ENCODE measurements at regions of chr15 and their contacts with region 1.

Region 1: GRCh38 chr15:90691982-90692773 is 25.0 kb upstream of the BLM start:
- DNase-seq: no peak
- H3K4me3 Mint-ChIP-seq: no peak overlapping the region
- H3K27ac Mint-ChIP-seq: no peak overlapping the region
- H3K4me1 Mint-ChIP-seq: peaks cover 49% of the 10 kb centered on the region
- H3K27me3 Mint-ChIP-seq: no peaks in the 10 kb centered on the region

Region 2: DNA sequence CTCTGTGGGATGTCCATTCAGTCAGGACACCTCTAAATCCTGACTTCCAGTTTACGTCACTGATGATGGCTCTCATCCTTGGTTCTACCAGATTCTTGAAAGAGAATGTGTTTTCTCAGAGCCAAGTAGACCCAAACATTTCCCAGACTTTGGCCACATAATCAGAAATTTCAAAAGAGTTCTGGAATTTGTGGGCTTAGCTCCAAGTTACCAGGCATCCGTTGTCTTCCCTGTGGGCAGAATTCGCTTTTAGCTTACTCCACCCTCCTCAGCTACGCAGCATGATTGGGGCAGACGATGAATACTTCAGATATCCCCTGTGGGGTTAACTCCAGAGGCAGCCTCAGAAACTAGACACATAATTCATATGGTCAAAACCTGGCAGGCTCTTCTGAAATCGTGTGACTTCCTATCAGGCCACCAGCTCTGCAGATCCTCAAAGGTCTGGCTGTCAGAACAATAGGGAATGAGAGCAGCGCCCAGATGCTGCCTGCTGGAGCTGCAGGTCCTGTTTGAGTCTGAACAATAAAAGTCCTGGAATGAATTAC is 131.9 kb before region 1 on chr15:
- intact Hi-C with region 1: loop called (anchors 10 kb)
- DNase-seq: no peak
- H3K4me3 Mint-ChIP-seq: no peak overlapping the region
- H3K27ac Mint-ChIP-seq: no peak overlapping the region
- H3K4me1 Mint-ChIP-seq: peaks cover 79% of the 10 kb centered on the region
- H3K27me3 Mint-ChIP-seq: no peaks in the 10 kb centered on the region

Region 3: GRCh38 chr15:90680371-90680935 is 11.7 kb before region 1 on chr15:
- intact Hi-C with region 1: loop called (anchors 1 kb)
- DNase-seq: no peak
- H3K4me3 Mint-ChIP-seq: no peak overlapping the region
- H3K27ac Mint-ChIP-seq: peak overlapping the region; percentile 79
- H3K4me1 Mint-ChIP-seq: peaks cover 52% of the 10 kb centered on the region
- H3K27me3 Mint-ChIP-seq: no peaks in the 10 kb centered on the region

Region 4: GRCh38 chr15:90924375-90924774 is 232.2 kb after region 1 on chr15:
- intact Hi-C with region 1: no loop called
- DNase-seq: no peak
- H3K4me3 Mint-ChIP-seq: no peak overlapping the region
- H3K27ac Mint-ChIP-seq: peak overlapping the region; percentile 43
- H3K4me1 Mint-ChIP-seq: peaks cover 25% of the 10 kb centered on the region
- H3K27me3 Mint-ChIP-seq: no peaks in the 10 kb centered on the region